ENCODE measurements at regions of chr22 and their contacts with region 1.

Region 1: GRCh38 chr22:17891481-17892167 is 117.4 kb upstream of the BID start:
- DNase-seq: peak; percentile 62
- ATAC-seq: peak; percentile 71 to 85

Region 2: GRCh38 chr22:18024276-18024947 is 132.8 kb after region 1 on chr22 and contains the start of gene MICAL3:
- intact Hi-C with region 1: loop called in 1 of 2 experiments (anchors 5 kb)
- DNase-seq: peak; percentile 63
- ATAC-seq: peak; percentile 92 to 93
- total RNA-seq, gene MICAL3: 54.7 to 80.1 TPM

Measured in left cardiac atrium (tissue), 4 donors.